ENCODE measurements at regions of chr17 and their contacts with region 1.

Region 1: DNA sequence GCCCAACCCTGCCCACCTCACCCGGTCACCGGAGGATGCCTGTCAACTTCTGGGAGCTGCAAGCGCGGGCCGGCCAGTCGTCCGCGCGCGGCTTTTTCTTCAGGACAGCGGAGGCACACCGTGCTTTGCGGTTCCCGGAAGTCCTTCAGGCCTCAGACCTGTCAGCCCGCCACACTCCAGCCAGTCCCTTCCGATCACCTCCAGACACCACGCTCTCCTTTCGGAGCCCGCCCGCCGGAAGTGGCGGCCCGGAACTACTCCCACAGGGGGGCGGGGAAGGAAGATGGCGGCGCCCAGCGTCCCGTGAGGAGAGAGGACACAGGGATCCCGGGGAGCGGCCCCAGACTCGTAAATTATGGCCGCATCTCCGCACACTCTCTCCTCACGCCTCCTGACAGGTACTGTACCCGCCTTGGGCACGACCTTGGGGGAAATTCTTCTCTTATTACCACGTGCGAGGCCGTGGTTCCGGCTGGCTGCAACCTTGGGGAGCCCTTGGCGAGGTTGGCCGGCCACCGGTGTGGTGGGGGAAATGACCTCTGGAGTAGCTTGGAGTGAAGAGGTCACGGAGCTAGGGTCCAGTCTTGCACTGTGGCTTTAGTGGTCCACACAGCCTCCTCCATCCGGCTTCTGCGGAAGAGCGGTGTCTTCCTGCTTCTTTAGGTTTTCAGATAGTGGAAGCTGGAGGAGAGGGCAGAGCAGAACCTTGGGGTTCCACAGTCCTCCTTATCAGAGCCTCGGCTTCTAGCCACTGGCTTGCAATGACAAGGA is at the start of gene COX10:
- DNase-seq: peak; percentile 93
- ATAC-seq: peak; percentile 99
- total RNA-seq, gene COX10: 43.8 TPM

Region 2: GRCh38 chr17:14205989-14206461 is 136.6 kb after region 1 on chr17:
- intact Hi-C with region 1: loop called (anchors 5 kb)
- DNase-seq: peak; percentile 89
- ATAC-seq: peak; percentile 96

Region 3: DNA sequence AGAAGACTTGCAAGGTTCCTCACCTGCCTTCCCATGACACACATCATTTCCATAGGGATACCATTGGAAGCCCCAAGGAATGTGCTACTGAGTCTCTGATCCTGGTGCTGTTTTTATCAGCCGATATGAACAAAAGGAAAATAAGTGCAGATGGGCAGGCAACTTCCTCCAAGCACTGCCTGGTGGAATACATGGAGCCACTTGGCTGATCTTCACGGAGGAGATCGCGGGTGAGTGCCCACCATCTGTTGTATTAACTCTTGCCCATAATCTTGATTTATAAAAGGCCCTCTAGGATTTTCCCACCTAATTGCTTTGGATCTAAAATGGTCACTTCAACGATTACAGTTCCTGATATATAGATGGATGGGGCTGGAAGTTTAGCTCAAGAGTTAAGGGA is 192.0 kb after region 1 on chr17:
- intact Hi-C with region 1: no loop called
- DNase-seq: no peak
- ATAC-seq: no peak

Measured in Right ventricle myocardium inferior (tissue), 1 donor.